ENCODE measurements at regions of chr10 and their contacts with region 1.

Region 1: GRCh38 chr10:102352066-102352715 is 43.3 kb upstream of the NFKB2 start:
- DNase-seq: no peak
- H3K4me3 ChIP-seq: no peak overlapping the region
- CTCF ChIP-seq: peak; percentile 83

Region 2: GRCh38 chr10:102312683-102313082 is 39.5 kb before region 1 on chr10:
- CTCF ChIA-PET with region 1: interaction called, 12 read pairs
- POLR2A ChIA-PET with region 1: no interaction called
- DNase-seq: no peak
- H3K4me3 ChIP-seq: no peak overlapping the region
- CTCF ChIP-seq: no peak

Region 3: DNA sequence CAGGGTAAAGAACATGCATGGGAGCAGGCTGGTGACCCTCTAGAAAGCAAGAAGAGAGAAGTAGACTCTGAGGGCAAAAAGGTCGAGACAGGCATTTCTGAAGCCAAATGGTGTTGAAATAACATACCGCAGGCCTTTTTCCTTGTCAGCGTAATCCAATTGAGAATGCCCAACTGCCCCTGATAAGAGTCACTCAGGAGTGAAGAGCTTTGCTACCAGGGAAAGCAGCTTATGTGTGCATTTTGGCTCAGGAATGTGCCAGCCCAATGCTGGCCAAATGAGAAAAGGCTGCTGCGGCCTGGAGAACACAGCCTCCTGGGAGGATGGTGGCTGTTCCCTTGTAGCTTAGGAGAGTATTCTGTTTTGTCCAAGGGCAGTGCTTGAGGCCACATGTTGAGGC is 18.1 kb before region 1 on chr10:
- CTCF ChIA-PET with region 1: interaction called, 92 read pairs
- POLR2A ChIA-PET with region 1: no interaction called
- DNase-seq: no peak
- H3K4me3 ChIP-seq: no peak overlapping the region
- CTCF ChIP-seq: no peak

Region 4: GRCh38 chr10:102375250-102375649 is 23.1 kb after region 1 on chr10:
- CTCF ChIA-PET with region 1: interaction called, 179 read pairs
- POLR2A ChIA-PET with region 1: no interaction called
- DNase-seq: no peak
- H3K4me3 ChIP-seq: no peak overlapping the region
- CTCF ChIP-seq: no peak

Measured in AG04449 (cell line).